Activated T-helper 2 cell treated with anti-CD3 and anti-CD28 coated beads, Interferon-gamma antibody, Interleukin-2, Interleukin-4, amounts not matched to agents 10 μg/mL and 5 μg/mL and 100 μg/mL, durations not matched to agents 14 hours and 24 hours and 36 hours (primary cell): ENCODE measurements at regions of chr2 and their contacts with region 1.

Region 1: GRCh38 chr2:136310005-136310495 is 192.1 kb upstream of the CXCR4 start:
- DNase-seq: no peak
- H3K4me3 Mint-ChIP-seq: peak overlapping the region; percentile 41
- H3K27ac Mint-ChIP-seq: peak overlapping the region; percentile 94
- H3K4me1 Mint-ChIP-seq: peaks cover 47% of the 10 kb centered on the region
- H3K27me3 Mint-ChIP-seq: no peaks in the 10 kb centered on the region

Region 2: GRCh38 chr2:135985018-135985825 is 324.8 kb before region 1 on chr2 and contains the start of gene DARS1:
- intact Hi-C with region 1: loop called (anchors 5 kb)
- DNase-seq: peak; percentile 80
- H3K4me3 Mint-ChIP-seq: peak within 1 kb of the TSS; percentile 94
- H3K27ac Mint-ChIP-seq: peak within 1 kb of the TSS; percentile 98
- H3K4me1 Mint-ChIP-seq: peaks cover 41% of the 10 kb centered on the region
- H3K27me3 Mint-ChIP-seq: no peaks in the 10 kb centered on the region
- total RNA-seq, gene DARS1: 179 and 183 TPM in 2 replicates

Region 3: DNA sequence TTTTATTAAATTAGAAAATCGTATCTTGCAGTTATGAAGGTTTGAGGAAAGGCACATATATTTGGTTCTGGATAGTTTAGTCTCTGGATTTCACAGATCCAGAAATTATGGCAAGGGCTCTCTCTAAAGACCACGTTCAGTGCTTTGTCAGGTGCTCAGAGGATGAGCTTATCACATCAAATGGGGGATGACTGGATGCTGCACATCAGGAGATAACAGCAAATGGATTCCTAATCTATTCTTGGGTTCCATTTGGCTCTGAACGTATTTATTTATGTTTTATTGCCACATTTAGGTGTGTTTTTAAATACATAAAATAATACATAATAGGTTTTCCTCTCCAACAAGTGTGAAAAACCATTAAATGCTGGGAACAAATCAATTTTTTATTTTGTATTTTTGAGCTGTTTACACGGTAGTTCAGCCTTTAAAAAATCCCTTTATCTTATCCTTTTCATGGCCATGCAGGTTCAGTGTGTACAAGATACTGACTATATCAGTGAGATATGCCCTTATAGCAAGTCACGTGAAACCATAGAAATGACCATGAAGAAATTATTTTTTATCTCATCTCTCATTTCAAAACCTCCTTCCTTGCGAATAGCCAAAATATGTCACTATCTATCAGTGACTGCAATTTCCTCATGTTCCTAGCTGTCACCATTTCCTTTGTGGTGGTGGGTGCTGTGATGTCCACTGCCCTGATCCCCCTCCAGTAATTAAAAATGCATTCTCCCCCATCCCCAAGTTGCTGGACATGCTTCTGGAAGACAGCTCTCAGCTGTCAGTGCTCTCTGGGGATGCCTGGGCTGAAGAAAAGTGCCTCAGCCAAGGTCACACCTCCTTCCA is 166.2 kb before region 1 on chr2:
- intact Hi-C with region 1: no loop called
- DNase-seq: no peak
- H3K4me3 Mint-ChIP-seq: no peak overlapping the region
- H3K27ac Mint-ChIP-seq: no peak overlapping the region
- H3K4me1 Mint-ChIP-seq: peaks cover 10% of the 10 kb centered on the region
- H3K27me3 Mint-ChIP-seq: peaks cover 51% of the 10 kb centered on the region

Region 4: GRCh38 chr2:136168720-136169119 is 141.3 kb before region 1 on chr2:
- intact Hi-C with region 1: no loop called
- DNase-seq: no peak
- H3K4me3 Mint-ChIP-seq: no peak overlapping the region
- H3K27ac Mint-ChIP-seq: no peak overlapping the region
- H3K4me1 Mint-ChIP-seq: peaks cover 4% of the 10 kb centered on the region
- H3K27me3 Mint-ChIP-seq: peaks cover 2% of the 10 kb centered on the region

Region 5: DNA sequence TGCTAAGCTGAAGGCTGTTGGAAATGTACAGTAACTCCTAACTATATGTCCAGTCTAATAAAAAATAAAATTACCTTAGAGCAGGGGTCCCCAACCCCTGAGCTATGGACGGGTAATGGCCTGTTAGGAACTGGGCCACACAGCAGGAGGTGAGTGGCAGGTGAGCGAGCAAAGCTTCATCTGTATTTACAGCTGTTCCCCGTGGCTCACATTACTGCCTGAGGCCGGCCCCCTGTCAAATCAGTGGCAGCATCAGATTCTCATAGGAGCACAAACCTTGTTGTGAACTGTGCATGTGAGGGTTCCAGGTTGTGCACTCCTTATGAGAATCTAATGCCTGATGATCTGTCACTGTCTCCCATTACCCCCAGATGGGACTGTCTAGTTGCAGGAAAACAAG is 119.0 kb before region 1 on chr2:
- intact Hi-C with region 1: no loop called
- DNase-seq: no peak
- H3K4me3 Mint-ChIP-seq: no peak overlapping the region
- H3K27ac Mint-ChIP-seq: no peak overlapping the region
- H3K4me1 Mint-ChIP-seq: no peaks in the 10 kb centered on the region
- H3K27me3 Mint-ChIP-seq: no peaks in the 10 kb centered on the region

Region 6: GRCh38 chr2:136207030-136207623 is 102.9 kb before region 1 on chr2:
- intact Hi-C with region 1: loop called (anchors 1 kb)
- DNase-seq: no peak
- H3K4me3 Mint-ChIP-seq: peak overlapping the region; percentile 28
- H3K27ac Mint-ChIP-seq: peak overlapping the region; percentile 85
- H3K4me1 Mint-ChIP-seq: peaks cover 38% of the 10 kb centered on the region
- H3K27me3 Mint-ChIP-seq: no peaks in the 10 kb centered on the region

Region 7: DNA sequence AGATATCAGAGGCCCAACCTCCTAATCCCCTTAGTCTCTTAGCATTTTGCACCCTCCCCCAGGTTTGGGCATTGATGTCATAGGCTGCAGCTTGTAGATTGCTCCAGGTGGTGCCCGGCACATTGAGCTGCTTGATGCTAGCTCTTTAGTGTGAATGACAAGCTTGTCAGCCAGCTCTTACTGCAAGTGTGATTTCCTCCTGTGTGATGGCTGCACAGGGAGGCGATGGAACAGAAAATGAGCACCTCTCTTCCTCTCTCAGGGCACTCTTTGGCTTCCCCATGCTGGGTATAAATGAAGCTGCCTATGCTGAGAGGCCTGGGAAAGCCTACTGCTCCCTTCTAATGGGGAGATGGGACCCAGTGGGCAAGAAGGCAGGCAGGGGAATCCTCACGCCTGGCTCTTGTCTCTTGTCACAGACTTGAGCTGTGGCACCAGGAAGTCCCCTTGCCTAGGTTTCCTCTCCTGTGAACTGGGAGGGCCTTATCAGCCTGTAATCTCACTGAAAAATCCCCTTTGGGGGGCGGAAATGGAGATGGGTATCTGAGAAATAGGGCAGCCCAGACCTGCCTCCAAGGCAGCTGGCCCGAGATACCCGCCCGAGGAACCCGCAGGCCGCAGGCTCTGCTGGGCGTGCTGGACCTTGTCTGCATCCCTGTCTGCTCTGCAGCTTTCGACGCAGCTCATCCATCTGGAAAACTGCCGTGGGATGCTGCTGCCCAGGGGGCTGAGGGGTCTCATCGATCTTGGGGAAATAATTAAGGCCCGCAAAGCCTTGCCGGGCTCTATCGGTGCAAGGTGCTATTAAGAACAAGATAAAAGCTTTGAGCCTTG is 28.6 kb before region 1 on chr2:
- intact Hi-C with region 1: loop called (anchors 1 kb)
- DNase-seq: peak; percentile 25
- H3K4me3 Mint-ChIP-seq: no peak overlapping the region
- H3K27ac Mint-ChIP-seq: peak overlapping the region; percentile 77
- H3K4me1 Mint-ChIP-seq: peaks cover 45% of the 10 kb centered on the region
- H3K27me3 Mint-ChIP-seq: no peaks in the 10 kb centered on the region

Region 8: DNA sequence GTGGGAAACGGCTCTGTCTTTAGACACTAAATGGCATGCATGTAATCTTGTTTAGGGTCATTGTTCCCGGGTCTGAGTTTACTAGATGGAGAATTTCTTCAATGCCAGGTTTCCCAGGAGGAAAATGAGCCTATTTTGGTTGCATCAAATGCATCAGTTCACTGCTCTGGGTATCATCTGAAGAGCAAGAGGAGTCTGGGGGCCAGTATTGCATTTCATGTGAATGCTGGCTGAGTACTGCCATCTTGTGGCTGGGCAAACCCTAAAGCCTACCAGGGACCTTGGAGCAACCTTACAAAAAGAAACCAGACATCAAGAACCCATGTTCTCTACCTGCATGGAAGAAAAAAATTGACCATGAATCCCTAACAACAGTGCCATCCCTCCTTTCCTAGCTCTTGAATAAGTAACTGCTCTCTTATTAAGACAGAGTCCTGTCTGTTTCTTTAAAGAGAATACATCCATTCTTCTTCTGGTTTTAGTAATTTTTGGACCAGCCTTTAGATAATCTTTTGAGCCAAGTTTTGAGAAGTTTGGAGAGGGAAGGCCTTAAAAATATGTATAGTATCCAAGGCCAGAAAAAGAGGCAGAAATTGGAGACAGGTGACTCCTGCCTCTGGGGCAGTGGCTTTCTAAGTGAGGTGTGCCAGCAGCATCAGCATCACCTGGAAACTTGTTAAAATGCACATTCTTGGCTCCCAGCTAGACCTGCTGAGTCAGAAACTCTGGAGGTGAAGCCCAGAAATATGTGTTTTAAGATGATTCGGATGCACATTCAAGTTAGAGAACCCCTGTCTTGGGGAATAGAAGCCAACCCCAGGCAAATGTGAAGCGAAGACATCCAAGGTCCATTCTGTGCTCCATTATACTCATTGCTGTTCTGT is 68.9 kb after region 1 on chr2:
- intact Hi-C with region 1: loop called (anchors 1 kb)
- DNase-seq: peak; percentile 66
- H3K4me3 Mint-ChIP-seq: no peak overlapping the region
- H3K27ac Mint-ChIP-seq: no peak overlapping the region
- H3K4me1 Mint-ChIP-seq: peaks cover 82% of the 10 kb centered on the region
- H3K27me3 Mint-ChIP-seq: no peaks in the 10 kb centered on the region

Region 9: GRCh38 chr2:136863874-136864273 is 553.8 kb after region 1 on chr2:
- intact Hi-C with region 1: no loop called
- DNase-seq: no peak
- H3K4me3 Mint-ChIP-seq: no peak overlapping the region
- H3K27ac Mint-ChIP-seq: no peak overlapping the region
- H3K4me1 Mint-ChIP-seq: no peaks in the 10 kb centered on the region
- H3K27me3 Mint-ChIP-seq: no peaks in the 10 kb centered on the region